Naive thymus-derived CD8-positive, alpha-beta T cell (primary cell): ENCODE measurements at regions of chr2 and their contacts with region 1.

Region 1: DNA sequence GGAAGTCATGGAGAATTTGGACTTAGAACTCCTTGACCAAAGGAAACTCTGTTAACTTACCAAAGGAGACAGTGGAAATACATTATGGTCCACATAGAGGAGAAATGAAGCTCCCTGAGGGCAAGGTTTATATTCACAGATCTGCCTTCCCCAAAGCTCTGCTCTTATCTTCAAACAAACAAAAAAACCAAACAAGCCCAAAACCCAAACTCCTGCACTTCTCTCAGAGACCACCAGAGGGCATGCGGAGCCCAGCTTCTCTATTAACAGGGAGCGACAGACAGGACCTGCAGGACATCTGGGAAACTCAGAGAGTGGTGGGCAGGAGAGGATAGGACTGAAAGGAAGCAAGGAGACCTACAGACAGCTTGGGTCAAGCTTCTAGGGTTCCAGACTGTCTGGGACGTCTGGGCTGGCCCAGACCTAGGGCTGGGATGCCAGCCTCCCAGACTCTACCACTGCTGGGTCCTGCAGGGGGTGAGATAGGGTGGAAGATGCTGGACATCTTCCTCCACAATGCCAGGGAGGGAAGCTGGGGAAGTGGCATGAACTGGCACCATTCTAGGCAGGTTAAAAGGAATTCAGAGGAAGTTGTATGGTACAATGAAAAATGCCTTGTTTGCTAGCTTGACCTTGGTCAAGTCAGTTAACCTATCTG is 4.0 kb upstream of the WNT10A start:
- DNase-seq: peak; percentile 47 to 88 (median 75)
- ATAC-seq: no peak
- H3K4me3 Mint-ChIP-seq: peak overlapping the region in 2 of 10 donors; percentile 19 to 70
- H3K27ac Mint-ChIP-seq: peak overlapping the region in 7 of 10 donors; percentile 1 to 63 (median 13)
- H3K4me1 Mint-ChIP-seq: peaks cover 27 to 54% (median 51%) of the 10 kb centered on the region in 4 donors
- H3K27me3 Mint-ChIP-seq: peaks cover 15 to 38% (median 22%) of the 10 kb centered on the region in 5 donors

Region 2: GRCh38 chr2:218701806-218702205 is 174.9 kb before region 1 on chr2:
- POLR2A ChIA-PET with region 1: no interaction called
- DNase-seq: no peak
- ATAC-seq: no peak
- H3K4me3 Mint-ChIP-seq: no peak overlapping the region
- H3K27ac Mint-ChIP-seq: no peak overlapping the region
- H3K4me1 Mint-ChIP-seq: no peaks in the 10 kb centered on the region
- H3K27me3 Mint-ChIP-seq: peaks cover 0 to 3% (median 0%) of the 10 kb centered on the region in 5 donors

Region 3: GRCh38 chr2:218892693-218893348 is 16.1 kb after region 1 on chr2:
- POLR2A ChIA-PET with region 1: interaction called, 331 read pairs
- DNase-seq: peak; percentile 78 to 95 (median 88)
- ATAC-seq: peak; percentile 68 to 74
- H3K4me3 Mint-ChIP-seq: peak overlapping the region; percentile 41 to 83 (median 76)
- H3K27ac Mint-ChIP-seq: peak overlapping the region; percentile 87 to 99 (median 96)
- H3K4me1 Mint-ChIP-seq: peaks cover 28 to 54% (median 50%) of the 10 kb centered on the region in 4 donors
- H3K27me3 Mint-ChIP-seq: no peaks in the 10 kb centered on the region